Activated CD4-positive, alpha-beta memory T cell treated with anti-CD3 and anti-CD28 coated beads for 36 hours (primary cell): ENCODE measurements at regions of chr1 and their contacts with region 1.

Region 1: DNA sequence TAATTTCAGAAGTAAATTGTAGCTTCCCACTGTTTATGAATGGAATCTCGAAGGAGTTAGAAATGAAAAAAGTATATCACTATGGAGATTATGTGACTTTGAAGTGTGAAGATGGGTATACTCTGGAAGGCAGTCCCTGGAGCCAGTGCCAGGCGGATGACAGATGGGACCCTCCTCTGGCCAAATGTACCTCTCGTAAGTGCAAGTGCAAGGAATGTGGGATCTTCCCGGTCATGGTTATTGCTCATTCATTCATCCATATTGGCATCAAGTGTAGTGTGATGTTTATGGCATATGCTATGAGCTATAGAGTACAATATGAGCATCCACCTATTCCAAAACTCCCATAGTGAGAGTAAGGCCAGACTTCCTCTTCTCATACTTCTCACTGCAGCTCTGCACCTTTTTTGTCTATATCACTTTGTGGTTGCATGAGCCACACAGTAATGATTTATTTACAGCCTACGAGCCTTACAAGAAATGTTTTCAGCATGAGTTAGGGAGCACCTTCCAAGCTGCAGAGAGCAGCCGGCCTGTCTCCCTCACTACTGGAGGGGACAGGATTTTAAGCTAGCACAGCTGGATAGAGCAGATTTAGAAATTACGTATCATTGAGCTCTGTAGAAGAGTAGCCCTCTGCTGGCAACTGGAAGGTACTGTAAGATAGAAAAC is 24.9 kb upstream of the CR1L start:
- DNase-seq: peak; percentile 10
- H3K4me3 Mint-ChIP-seq: no peak overlapping the region
- H3K27ac Mint-ChIP-seq: no peak overlapping the region
- H3K4me1 Mint-ChIP-seq: peaks cover 2% of the 10 kb centered on the region
- H3K27me3 Mint-ChIP-seq: no peaks in the 10 kb centered on the region

Region 2: DNA sequence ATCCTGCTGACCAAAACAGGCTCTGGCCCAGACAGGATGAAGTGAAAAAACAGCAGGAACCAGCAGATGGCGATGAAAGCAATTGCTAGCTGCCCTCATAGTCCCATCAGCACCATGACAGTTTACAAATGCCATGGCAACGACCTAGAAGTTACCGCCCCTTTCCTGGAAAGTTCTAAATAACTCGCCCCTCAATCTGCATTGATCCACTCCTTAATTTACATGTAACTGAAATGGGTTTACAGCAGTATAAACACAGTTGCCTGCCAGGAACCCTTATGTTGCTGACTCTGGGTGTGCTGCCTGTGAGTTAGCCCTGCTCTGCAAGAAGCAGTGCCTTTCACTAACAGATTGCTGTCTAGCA is 40.6 kb before region 1 on chr1:
- CTCF ChIA-PET with region 1: interaction called, 18 read pairs
- POLR2A ChIA-PET with region 1: no interaction called
- intact Hi-C with region 1: no loop called
- DNase-seq: peak; percentile 57
- H3K4me3 Mint-ChIP-seq: no peak overlapping the region
- H3K27ac Mint-ChIP-seq: no peak overlapping the region
- H3K4me1 Mint-ChIP-seq: peaks cover 5% of the 10 kb centered on the region
- H3K27me3 Mint-ChIP-seq: peaks cover 2% of the 10 kb centered on the region

Region 3: DNA sequence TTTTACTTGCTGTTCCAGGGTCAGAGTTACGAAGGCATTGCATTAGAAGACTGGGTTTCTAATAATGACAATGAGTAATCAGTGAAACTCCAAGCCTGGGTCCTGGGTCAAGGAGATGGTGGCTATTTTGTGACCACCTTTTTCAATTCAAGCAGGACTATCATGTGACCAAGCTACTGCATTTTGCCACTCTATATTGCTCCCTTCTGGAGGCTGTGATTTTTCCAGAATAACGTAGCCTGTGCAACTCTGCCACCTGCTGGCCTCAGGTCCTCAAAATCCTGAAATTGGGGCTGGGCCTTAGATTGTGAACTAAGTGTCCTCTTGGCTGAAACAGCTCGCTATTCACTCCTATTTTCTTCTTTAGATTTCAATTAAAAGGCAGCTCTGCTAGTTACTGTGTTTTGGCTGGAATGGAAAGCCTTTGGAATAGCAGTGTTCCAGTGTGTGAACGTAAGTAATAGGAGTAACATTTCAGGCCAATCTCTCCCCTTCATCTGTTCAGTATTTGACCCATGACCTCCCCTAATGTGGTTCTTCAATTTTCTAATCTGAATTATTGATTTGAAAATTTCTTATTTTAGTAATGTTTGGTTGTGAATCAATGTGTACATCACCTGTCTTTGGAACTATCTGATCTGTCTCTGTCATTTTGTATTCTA is 78.9 kb after region 1 on chr1:
- CTCF ChIA-PET with region 1: interaction called, 14 read pairs
- POLR2A ChIA-PET with region 1: no interaction called
- intact Hi-C with region 1: no loop called
- DNase-seq: peak; percentile 66
- H3K4me3 Mint-ChIP-seq: no peak overlapping the region
- H3K27ac Mint-ChIP-seq: no peak overlapping the region
- H3K4me1 Mint-ChIP-seq: no peaks in the 10 kb centered on the region
- H3K27me3 Mint-ChIP-seq: peaks cover 13% of the 10 kb centered on the region

Region 4: GRCh38 chr1:207754974-207755689 is 135.1 kb after region 1 on chr1:
- CTCF ChIA-PET with region 1: no interaction called
- POLR2A ChIA-PET with region 1: no interaction called
- intact Hi-C with region 1: no loop called
- DNase-seq: no peak
- H3K4me3 Mint-ChIP-seq: no peak overlapping the region
- H3K27ac Mint-ChIP-seq: no peak overlapping the region
- H3K4me1 Mint-ChIP-seq: peaks cover 56% of the 10 kb centered on the region
- H3K27me3 Mint-ChIP-seq: no peaks in the 10 kb centered on the region